PC-9 (cell line): ENCODE measurements at regions of chr17 and their contacts with region 1.

Region 1: DNA sequence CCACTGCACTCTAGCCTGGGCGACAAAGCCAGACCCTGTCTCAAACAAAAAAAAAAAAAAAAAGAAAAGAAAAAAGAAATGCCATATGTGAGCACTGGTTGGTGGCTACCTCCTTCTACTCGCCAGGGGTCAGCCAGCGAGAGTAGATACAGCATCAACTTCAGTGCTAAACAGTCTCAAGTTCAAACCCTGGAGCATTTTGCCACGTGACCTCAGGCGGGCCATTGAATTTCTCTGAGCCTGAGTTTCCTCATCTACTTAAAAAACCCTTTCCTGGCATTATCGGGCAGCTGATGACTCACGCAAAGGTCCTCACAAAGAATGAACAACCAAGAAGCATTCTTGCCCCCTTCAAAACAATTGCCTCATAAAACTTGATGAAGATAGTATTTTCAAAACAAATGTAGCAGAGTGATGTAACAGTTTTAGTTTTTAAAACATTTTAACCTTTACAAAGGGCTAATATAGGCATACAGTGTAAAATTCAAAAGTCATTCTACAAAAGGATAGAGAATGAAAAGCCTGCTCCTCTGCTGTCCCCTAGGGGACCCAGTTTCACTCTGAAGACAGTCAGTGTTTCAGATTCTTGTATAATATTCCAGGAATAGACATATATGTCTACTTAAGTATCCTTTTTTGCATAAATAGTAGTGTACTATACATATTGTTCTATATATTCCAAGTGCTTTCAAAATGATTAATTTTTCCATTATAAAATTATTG is 28.4 kb downstream of the DNAH2 start:
- DNase-seq: peak; percentile 80 to 87
- H3K4me3 ChIP-seq: no peak overlapping the region
- H3K27ac ChIP-seq: peak overlapping the region; percentile 76
- H3K4me1 ChIP-seq: peaks cover 57% of the 10 kb centered on the region
- H3K27me3 ChIP-seq: no peaks in the 10 kb centered on the region
- CTCF ChIP-seq: peak; percentile 28

Region 2: DNA sequence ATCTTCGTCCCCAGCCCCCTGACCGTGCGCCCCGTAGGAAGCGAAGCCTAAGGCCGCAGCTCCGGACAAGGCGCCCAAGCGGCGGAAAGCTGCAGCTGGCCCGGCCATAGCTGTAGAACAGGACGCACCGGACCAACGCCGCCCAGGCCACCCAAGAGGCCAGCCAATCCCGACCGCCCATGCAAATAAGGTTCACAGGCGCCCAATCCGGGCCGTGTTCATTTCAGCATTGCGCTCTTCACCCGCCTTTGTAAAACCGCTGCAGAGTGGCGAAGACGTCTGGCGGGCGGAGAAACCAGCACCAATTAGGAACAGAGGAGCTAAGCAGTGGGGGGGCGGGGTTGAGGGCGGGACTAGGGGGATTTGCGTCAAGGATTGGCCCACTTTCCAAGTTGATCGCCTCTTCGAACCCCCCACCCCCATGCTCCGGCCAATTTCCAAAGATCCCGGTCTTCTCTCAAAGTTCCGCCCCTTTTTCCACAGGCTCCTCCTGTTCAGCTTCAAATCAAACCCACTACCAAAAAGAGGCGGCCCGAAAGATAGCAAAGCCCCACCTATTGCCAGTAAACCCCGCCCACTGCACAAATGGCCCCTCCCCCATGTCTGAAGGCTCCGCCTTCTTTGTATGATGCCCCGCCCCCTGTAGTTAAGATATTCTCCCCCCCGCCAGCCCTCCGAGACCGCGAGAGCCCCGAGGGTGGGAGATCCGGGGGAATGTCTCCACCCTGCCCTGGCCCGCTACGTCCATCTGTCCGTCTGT is 341.8 kb before region 1 on chr17 and contains the start of gene TMEM256:
- CTCF ChIA-PET with region 1: interaction called, 11 read pairs
- POLR2A ChIA-PET with region 1: no interaction called
- intact Hi-C with region 1: no loop called
- DNase-seq: peak; percentile 96 to 99
- H3K4me3 ChIP-seq: peak within 1 kb of the TSS; percentile 76
- H3K27ac ChIP-seq: peak within 1 kb of the TSS; percentile 51; the same call in 1 of the 2 replicates
- H3K4me1 ChIP-seq: peaks cover 15% of the 10 kb centered on the region
- H3K27me3 ChIP-seq: no peaks in the 10 kb centered on the region
- CTCF ChIP-seq: no peak
- total RNA-seq, gene TMEM256: 55.4 and 91.7 TPM in 2 replicates

Region 3: DNA sequence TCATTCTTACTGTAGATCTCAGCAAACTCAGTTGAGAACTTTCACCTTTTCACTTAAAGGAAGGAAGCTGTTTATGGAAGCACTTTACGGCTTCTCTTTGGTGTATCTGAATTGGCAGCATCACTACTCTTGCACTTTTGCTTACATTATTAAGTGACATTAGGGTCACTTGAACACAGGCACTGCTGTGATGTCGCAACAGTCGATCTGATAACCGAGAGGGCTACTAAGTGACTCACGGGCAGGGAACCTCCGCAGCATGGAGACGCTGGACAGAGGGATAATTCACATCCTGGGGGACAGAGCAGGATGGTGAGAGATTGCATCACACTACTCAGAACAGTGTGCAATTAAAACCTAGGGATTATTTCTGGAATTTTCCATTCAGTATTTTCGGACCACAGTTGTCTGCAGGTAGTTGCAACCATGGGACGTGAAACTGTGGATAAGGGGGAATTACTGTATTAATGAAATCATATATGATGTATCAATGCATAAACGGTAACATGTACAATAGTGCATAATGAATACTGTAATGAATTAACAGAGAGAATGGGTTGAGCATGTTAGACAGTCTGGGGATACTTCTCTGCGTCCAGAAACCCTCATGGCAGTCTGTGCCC is 28.2 kb after region 1 on chr17:
- CTCF ChIA-PET with region 1: interaction called, 12 read pairs
- POLR2A ChIA-PET with region 1: no interaction called
- intact Hi-C with region 1: no loop called
- DNase-seq: peak; percentile 59 to 95
- H3K4me3 ChIP-seq: no peak overlapping the region
- H3K27ac ChIP-seq: peak overlapping the region; percentile 77
- H3K4me1 ChIP-seq: peaks cover 59% of the 10 kb centered on the region
- H3K27me3 ChIP-seq: no peaks in the 10 kb centered on the region
- CTCF ChIP-seq: no peak

Region 4: DNA sequence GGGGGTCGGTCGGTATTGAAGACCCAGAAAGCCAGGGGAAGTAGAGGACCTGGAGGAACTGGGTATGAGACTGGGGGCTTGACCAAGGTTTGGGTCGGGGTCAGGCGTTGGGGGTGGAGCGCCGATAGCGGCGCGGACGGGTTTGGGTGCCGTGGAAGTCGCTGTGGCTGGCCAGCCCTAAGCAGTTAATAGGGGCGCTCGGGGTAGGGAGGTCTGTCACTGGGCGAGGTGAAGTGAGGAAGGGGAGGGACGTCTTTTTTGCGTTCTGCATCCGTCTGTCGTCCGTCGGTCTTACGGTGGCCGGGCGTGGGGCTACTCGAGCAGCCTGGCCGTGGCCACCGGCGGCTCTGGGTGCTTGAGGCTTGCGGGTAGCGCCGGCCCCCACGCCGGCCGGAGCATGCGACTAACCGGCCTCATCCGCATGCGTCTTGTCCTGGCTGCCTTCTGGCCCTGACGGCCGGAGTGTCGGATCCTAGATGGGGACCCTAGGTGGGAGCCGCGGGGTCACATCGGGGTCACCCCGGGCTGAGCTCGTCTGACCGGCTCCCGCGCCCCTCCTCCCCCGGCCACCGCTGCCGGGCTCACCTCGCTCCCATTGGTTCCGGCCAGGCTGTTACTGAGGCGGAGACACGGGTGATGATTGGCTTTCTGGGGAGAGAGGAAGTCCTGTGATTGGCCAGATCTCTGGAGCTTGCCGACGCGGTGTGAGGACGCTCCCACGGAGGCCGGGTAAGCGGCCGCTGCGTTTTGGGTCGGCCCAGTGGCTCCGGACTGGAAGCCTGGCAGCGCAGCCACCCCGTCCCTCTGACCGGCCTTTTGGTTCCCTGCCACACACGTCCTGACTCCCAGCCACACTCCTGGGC is 98.6 kb after region 1 on chr17:
- CTCF ChIA-PET with region 1: no interaction called
- POLR2A ChIA-PET with region 1: no interaction called
- intact Hi-C with region 1: loop called (anchors 5 kb)
- DNase-seq: peak; percentile 78 to 93
- H3K4me3 ChIP-seq: peak overlapping the region; percentile 93
- H3K27ac ChIP-seq: peak overlapping the region; percentile 92
- H3K4me1 ChIP-seq: peaks cover 10% of the 10 kb centered on the region
- H3K27me3 ChIP-seq: no peaks in the 10 kb centered on the region
- CTCF ChIP-seq: no peak

Region 5: DNA sequence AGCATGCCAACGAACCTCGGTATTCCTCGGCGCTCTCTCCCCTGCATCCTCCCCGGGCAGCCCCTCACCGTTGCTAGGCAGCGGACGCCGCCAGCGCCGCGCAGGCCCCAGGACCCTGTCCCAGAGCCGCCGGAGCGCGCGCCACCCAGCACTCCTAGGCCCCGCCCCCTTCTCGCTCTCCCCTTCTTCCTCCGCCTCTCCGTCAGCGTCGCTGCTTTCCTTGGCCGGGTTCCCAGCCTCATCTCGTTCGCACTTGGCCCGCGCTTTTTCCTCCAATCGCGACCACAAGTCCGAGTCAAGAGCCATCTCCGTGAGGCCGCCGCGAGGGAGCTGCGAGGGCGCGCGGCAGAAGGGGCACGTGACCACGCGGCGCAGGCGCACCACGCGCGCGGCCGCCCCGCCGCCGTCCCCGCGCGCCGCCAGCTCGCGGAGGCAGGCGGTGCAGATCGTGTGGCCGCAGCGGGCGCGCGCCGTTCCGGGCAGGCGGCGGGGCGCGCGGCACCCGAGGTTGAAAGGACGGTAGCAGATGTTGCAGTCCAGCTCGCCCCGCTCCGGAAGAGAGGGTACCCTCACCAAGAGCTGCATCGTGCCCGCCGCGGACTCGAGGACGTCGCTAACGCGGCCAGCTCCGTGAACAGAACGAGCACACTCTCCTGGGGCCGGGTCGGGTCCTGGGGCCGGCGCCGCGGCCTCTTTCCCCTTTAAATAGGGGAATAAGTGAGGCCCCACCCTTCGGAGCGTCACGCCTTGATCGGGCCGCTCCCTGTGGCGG is 169.9 kb after region 1 on chr17 and contains the start of gene RNF227:
- CTCF ChIA-PET with region 1: interaction called, 8 read pairs
- POLR2A ChIA-PET with region 1: no interaction called
- intact Hi-C with region 1: loop called (anchors 1 kb)
- DNase-seq: peak; percentile 67 to 91
- H3K4me3 ChIP-seq: peak within 1 kb of the TSS; percentile 60
- H3K27ac ChIP-seq: no peak within 1 kb of the TSS
- H3K4me1 ChIP-seq: no peaks in the 10 kb centered on the region
- H3K27me3 ChIP-seq: no peaks in the 10 kb centered on the region
- CTCF ChIP-seq: no peak
- total RNA-seq, gene RNF227: 3.1 and 4.2 TPM in 2 replicates

Region 6: GRCh38 chr17:7951143-7951803 is 205.4 kb after region 1 on chr17:
- CTCF ChIA-PET with region 1: no interaction called
- POLR2A ChIA-PET with region 1: no interaction called
- intact Hi-C with region 1: no loop called
- DNase-seq: no peak
- H3K4me3 ChIP-seq: no peak overlapping the region
- H3K27ac ChIP-seq: no peak overlapping the region
- H3K4me1 ChIP-seq: no peaks in the 10 kb centered on the region
- H3K27me3 ChIP-seq: no peaks in the 10 kb centered on the region
- CTCF ChIP-seq: no peak

Region 7: DNA sequence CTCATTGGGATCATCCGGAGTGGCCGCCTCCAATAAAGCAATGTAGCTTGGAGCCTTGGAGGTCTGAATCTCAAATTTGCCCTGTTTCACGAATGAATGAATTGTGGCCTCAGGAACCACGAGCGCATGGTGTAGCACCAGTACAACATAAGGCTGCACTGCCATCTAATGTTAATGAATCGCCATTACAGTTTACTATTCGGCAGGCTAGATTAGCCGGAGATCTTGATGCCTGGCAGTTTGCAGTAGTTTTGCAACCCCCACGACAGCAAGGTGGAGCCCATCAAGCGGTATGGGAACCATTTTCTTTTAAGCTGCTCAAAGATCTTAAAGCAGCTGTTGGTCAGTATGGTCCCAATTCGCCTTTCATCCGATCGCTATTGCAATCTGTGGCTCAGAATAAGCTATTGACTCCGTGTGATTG is 311.8 kb after region 1 on chr17:
- CTCF ChIA-PET with region 1: interaction called, 9 read pairs
- POLR2A ChIA-PET with region 1: no interaction called
- intact Hi-C with region 1: loop called (anchors 1 kb)
- DNase-seq: peak; percentile 61 to 63
- H3K4me3 ChIP-seq: no peak overlapping the region; the same call in 1 of the 2 replicates
- H3K27ac ChIP-seq: no peak overlapping the region
- H3K4me1 ChIP-seq: peaks cover 28% of the 10 kb centered on the region
- H3K27me3 ChIP-seq: peaks cover 5% of the 10 kb centered on the region
- CTCF ChIP-seq: peak; percentile 74